ENCODE measurements at regions of chr7 and their contacts with region 1.

Region 1: DNA sequence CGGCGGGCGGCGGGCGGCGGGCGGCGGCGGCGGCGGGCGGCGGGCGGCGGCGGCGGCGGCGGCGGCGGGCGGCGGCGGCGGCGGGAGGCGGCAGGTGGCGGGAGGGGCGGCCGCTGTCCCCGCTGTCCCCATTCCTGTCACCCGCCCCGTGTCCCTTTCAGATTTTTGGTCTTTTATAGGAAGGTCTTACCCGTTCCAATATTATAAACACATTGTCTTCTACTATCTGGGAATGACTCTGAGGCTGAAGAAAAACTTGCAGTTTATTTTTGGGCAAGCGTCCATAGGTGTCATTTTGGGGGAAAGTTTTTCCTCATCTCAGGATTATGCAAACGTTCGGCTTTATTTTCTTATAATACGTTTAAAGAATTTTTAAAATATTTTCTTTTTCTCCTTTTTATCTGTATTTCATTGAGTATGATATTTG is 578 bp downstream of the ZNF713 start:
- DNase-seq: no peak
- ATAC-seq: no peak

Region 2: DNA sequence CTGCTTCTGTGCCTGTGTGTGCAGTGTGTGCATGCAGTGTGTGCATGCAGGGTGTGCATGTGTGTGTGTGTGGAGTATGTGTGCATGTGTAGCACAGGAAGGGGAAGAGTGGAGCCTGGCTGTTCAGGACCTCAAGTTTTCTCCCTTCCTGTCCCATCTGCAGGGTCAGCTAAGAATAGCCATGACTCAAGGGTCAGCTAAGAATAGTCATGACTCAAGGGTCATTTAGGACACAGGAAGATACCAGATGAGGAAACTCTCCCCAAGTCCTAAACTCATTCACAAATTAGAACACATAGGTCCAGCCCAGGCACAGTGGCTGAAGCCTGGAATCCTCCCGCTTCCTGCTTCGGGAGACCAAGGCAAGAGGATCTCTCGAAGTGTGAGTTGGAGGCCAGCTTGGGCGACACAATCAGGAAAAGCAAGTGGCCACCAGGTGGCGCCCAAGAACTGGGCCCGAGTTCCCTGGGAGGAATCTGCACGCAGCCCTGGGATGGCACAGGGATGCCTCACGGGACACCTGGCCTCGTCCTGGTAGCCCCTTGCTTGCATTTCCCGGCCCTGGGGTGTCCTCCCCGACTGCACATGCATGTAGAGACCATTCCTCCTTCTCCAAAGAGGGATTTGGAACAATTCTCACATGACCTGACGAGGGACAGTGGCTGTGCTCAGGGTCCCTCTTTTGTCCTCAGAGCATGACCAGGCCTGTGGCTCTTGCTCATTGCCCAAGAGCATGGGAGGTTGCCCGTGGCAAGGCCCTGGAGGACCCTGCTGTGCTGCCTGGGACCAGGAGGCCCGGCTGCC is 294.1 kb before region 1 on chr7:
- intact Hi-C with region 1: no loop called
- DNase-seq: peak; percentile 87
- ATAC-seq: peak; percentile 59

Region 3: GRCh38 chr7:55871932-55872485 is 15.8 kb before region 1 on chr7:
- intact Hi-C with region 1: no loop called
- DNase-seq: no peak
- ATAC-seq: no peak

Region 4: DNA sequence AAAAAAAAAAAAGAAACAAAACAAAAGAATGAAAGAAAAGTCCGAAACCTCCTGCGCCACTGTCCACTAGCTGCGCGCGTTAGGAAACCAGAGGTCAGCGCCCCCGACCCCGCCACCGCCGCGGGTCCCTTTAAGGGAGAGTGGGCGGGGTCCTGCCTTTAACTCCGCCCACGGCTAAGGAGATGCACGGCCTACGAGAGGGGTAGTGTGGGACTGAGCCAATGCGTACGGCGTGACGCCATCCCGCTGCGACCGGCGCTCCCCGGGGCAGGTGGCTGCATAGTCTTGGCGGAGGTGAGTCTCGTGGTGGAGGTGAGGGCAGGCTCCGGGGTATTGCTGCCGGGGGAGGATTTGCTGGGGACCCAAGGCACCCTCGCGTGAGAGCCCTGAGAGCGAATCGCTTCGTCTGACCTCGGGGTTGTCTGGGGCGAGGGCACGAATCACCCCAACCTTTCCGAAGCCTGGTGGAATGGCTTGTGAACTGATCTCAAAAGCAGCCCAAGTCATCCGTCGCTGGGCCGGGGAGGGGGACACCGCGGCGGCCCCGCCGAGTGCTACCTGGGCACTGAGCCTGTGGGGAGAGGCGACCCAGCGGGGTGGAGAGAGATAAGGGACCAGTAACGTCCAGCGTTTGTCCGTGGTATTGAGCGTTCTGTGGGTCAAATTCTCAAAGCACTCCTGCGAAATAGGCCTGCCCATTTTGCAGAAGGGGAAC is 64.0 kb after region 1 on chr7 and contains the start of gene MRPS17:
- intact Hi-C with region 1: loop called (anchors 2 kb)
- DNase-seq: peak; percentile 96
- ATAC-seq: peak; percentile 100
- total RNA-seq, gene MRPS17: 20.8 TPM

Region 5: DNA sequence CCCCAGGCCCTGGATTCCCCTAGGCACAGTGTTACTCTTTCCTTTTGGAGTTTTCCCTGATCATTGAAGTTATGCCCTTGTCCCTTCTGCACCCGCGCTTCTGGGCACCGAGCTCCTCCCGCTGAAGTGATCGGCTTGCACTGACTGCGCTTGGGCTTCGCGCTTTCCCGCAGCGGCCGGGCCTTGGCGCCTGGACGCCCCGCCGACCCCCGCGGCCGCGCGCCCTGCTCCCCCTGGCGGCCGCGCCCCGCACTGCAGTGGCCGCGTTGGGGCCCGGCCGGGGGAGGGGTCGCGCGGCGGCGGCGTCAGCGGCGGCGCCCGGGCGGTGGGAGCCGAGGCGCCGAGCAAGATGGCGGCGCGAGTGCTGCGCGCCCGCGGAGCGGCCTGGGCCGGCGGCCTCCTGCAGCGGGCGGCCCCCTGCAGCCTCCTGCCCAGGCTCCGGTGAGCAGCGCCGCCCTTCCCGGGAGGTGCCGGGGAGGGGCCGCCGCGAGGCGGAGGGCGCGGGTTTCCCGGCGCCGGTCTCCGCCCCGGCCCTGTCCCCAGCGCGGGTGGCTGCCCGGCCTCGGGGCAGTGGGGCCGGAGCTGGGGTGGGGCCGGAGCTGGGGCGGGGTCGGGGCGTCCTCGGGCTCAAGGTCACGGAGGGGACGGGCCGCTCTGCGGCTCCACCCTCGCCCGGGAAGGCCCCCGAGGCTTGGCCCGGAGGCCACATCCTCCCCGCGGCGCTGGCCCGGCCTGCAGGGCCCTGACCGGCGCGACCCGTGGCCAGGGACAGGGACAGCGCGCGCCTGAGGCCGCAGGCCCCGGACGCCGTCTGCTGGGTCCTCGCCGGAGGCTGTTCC is 76.6 kb after region 1 on chr7 and contains the start of gene NIPSNAP2:
- intact Hi-C with region 1: loop called (anchors 5 kb)
- DNase-seq: peak; percentile 92
- ATAC-seq: peak; percentile 96
- total RNA-seq, gene NIPSNAP2: 348 TPM